Activated T-helper 1 cell treated with anti-CD3 and anti-CD28 coated beads, Interleukin-12 subunit alpha, Interleukin-12 subunit beta, Interleukin-2, Interleukin-4 antibody, amounts not matched to agents 30 ng/mL and 10 ng/mL and 1 ng/mL, durations not matched to agents 14 hours and 24 hours and 36 hours (primary cell): ENCODE measurements at regions of chr1 and their contacts with region 1.

Region 1: DNA sequence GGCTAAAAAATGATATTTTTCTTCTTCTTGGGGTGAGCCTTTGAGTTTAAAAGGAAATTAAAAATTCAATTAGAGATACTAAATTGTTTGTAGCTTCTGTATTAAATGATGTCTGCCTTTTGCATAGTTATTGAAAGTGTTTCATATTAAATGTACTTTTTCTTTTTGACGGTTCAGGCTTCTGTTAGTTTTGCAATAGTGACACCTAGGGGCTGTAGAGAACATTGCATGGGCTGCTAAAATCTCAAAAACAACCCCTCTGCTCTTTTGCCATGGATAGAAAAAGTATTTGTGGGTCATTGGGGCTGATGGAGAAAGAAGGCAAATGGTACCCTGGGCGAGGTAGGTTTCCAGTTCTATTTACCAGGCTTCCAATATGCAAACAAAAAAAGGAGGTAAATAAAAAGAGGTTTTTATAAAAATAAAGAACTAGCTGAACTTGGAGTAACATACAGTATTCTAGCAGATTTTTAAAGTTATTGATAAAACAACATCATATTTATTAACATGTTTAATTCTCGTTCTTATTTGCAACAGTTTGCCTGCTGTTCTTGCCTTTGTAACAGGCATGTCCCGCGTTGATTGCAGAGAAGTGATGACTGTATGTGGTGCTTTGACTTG is 115.4 kb upstream of the HOOK1 start:
- DNase-seq: no peak
- H3K4me3 Mint-ChIP-seq: no peak overlapping the region
- H3K27ac Mint-ChIP-seq: no peak overlapping the region
- H3K4me1 Mint-ChIP-seq: peaks cover 33% of the 10 kb centered on the region
- H3K27me3 Mint-ChIP-seq: no peaks in the 10 kb centered on the region

Region 2: DNA sequence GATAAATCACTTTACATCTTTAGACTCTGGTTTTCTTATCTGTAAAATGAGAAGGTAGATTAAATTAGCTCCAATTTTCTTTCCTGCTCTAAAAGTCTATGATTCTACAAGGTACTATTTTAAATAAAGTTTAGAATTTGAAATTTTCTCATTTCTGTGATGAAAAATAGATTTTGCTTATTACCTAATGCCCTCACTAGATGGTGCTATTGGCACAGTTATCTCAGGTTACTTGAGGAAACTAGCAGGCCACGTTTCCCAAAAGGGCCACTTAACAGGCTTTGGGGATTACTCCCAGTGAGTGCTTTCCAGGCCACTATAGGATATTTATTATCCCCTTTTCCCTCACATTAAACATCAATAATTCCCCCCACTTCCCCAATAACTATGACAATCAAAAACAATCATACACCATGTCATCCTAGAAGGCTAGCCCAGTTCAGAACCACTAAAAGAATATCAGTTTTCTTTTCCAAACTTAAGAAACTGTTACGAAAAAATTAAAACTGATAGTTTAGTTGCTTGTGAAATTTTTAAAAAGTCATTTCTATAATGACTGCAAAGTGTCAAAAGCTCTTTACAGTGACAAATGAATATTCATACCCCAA is 1183.4 kb before region 1 on chr1:
- intact Hi-C with region 1: loop called (anchors 5 kb)
- DNase-seq: no peak
- H3K4me3 Mint-ChIP-seq: no peak overlapping the region
- H3K27ac Mint-ChIP-seq: no peak overlapping the region
- H3K4me1 Mint-ChIP-seq: peaks cover 16% of the 10 kb centered on the region
- H3K27me3 Mint-ChIP-seq: no peaks in the 10 kb centered on the region

Region 3: GRCh38 chr1:58699011-58699762 is 1000.1 kb before region 1 on chr1:
- intact Hi-C with region 1: loop called (anchors 1 kb)
- DNase-seq: no peak
- H3K4me3 Mint-ChIP-seq: peak overlapping the region; percentile 99
- H3K27ac Mint-ChIP-seq: peak overlapping the region; percentile 98
- H3K4me1 Mint-ChIP-seq: peaks cover 9% of the 10 kb centered on the region
- H3K27me3 Mint-ChIP-seq: no peaks in the 10 kb centered on the region

Region 4: GRCh38 chr1:58903514-58904298 is 795.6 kb before region 1 on chr1:
- intact Hi-C with region 1: loop called (anchors 5 kb)
- DNase-seq: peak; percentile 81
- H3K4me3 Mint-ChIP-seq: peak overlapping the region; percentile 76
- H3K27ac Mint-ChIP-seq: peak overlapping the region; percentile 87
- H3K4me1 Mint-ChIP-seq: peaks cover 32% of the 10 kb centered on the region
- H3K27me3 Mint-ChIP-seq: no peaks in the 10 kb centered on the region

Region 5: DNA sequence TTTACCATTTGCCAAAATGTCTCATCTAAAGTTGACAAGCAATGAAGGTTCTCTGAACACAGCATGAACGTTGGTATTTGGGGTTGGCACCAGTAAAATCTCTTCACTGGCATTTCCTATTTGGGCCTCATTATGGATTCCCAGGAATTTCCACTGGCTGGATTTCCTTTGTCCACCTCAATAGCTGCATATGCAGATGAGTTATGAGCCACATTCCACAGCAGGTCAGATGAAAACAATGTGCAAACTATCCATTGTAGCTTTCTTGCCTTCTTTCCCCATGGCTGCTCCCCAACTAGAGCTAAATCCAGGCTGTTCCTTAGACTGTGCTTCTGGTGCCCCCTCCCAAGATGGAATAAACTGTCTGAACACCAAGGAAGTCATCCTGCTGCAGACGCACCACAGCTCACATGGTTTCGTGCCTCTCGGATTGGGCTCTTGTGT is 570.5 kb before region 1 on chr1:
- intact Hi-C with region 1: loop called (anchors 5 kb)
- DNase-seq: no peak
- H3K4me3 Mint-ChIP-seq: no peak overlapping the region
- H3K27ac Mint-ChIP-seq: no peak overlapping the region
- H3K4me1 Mint-ChIP-seq: peaks cover 42% of the 10 kb centered on the region
- H3K27me3 Mint-ChIP-seq: peaks cover 5% of the 10 kb centered on the region

Region 6: DNA sequence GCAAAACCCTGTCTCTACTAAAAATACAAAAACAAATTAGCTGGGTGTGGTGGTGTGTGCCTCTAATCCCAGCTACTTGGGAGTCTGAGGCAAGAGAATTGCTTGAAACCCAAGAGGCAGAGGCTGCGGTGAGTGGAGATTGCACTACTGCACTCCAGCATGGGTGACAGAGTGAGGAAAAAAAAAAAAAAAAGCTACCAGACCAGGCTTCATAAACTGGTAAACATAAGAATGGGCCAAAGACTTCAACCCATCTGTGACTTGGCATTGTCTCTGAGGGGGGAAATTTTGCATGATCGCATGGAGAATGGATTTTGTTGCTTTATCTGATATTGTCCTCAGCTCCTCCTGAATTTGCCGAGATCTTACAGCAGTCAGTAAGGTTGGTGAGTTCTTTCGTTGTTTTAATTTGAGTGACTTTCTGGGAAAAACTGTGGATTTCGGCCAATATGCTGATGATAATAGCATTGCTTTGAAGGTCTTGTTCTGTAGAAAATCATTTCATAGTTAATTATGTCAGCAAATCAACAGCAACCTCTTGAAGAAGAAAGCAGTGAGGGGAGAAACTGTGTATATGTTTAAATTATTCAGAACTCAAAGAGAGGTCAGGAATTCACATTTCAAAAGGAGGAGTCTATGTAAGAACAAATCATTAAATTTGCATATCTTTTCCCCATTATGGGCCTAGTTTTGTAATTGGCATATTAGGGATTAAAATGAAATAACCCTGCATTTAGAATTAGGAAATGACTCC is 389.4 kb before region 1 on chr1:
- intact Hi-C with region 1: no loop called
- DNase-seq: no peak
- H3K4me3 Mint-ChIP-seq: no peak overlapping the region
- H3K27ac Mint-ChIP-seq: no peak overlapping the region
- H3K4me1 Mint-ChIP-seq: peaks cover 11% of the 10 kb centered on the region
- H3K27me3 Mint-ChIP-seq: no peaks in the 10 kb centered on the region

Region 7: GRCh38 chr1:59432531-59433439 is 266.6 kb before region 1 on chr1:
- intact Hi-C with region 1: loop called (anchors 2 kb)
- DNase-seq: no peak
- H3K4me3 Mint-ChIP-seq: no peak overlapping the region
- H3K27ac Mint-ChIP-seq: peak overlapping the region; percentile 61
- H3K4me1 Mint-ChIP-seq: peaks cover 49% of the 10 kb centered on the region
- H3K27me3 Mint-ChIP-seq: no peaks in the 10 kb centered on the region

Region 8: DNA sequence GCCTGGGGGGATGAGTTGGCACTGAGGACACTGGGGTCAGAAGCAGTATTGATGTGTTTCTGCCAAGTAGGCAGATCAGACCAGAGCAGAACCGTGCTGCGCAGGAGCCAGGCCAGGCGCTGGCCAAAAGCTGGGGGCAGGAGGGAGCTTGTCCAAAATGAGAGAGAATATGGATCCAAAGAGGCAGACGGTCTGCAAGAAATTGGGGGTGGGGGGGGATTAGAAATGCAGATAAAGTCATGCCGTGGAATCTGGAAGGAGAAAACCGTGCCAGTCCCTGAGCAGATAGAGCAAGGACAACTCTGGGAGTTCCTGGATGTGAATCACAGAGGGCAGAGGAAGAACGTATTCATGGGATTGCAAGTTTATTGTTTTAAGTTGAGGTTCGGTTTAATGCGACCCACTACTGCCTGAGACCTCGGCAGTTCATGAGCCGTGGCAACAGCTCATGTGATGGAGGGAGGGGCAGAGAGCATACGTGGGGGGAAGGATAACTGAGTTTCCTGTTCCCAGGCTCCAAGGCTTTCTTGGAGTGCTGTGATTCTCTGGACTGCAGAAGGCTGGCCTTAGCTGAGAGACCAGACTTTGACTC is 178.4 kb before region 1 on chr1:
- intact Hi-C with region 1: no loop called
- DNase-seq: no peak
- H3K4me3 Mint-ChIP-seq: no peak overlapping the region
- H3K27ac Mint-ChIP-seq: no peak overlapping the region
- H3K4me1 Mint-ChIP-seq: no peaks in the 10 kb centered on the region
- H3K27me3 Mint-ChIP-seq: no peaks in the 10 kb centered on the region

Region 9: GRCh38 chr1:59638231-59638711 is 61.1 kb before region 1 on chr1:
- intact Hi-C with region 1: no loop called
- DNase-seq: no peak
- H3K4me3 Mint-ChIP-seq: no peak overlapping the region
- H3K27ac Mint-ChIP-seq: no peak overlapping the region
- H3K4me1 Mint-ChIP-seq: no peaks in the 10 kb centered on the region
- H3K27me3 Mint-ChIP-seq: no peaks in the 10 kb centered on the region